Cardiac septum (tissue), 1 donor: ENCODE measurements at regions of chr1 and their contacts with region 1.

Region 1: DNA sequence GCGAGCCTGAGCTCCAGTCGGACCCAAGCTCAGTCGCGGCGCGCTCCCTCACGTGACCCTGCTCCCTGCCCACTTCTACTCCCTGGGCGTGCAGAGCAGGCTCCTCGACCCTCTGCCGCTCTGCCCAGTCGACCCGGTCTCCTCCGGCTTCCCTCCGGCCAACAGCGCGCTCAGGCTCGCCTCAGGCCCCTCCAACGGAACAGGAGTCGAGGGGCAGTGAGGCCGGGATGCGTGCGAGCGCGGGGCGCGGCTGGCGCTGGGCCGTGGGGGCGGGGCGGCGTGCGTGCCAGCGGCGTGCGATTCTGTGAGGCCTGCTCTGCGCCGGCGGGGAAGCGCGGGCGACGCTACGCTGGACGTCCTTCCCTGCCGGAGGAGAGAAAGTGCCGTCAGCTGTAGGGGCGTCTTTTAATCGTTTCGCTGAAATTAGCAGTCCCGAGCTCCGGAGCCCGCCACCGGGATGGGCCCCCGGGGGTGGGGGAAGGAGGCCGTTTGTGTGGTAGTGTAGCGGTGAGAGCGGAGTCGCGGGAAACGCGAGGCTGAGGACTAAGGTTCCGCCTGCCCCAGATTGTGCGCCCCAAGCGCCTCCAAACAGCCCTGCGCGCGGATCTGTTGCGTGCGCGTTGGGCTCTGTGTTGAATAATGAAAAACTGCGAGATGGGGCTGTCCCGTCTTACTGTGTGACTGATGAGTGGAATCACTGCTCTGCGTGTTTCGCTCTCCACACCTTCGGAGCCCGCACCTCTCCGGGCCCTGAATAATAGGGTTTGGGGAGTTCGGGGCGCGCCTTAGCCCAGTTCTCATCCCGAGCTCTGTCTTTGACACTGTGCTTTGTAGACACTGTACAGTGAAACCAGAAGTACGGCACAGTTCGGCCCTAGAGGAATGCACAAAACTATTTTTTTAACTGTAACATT is at the start of gene ACBD6:
- DNase-seq: peak; percentile 91
- total RNA-seq, gene ACBD6: 19.0 TPM

Region 2: DNA sequence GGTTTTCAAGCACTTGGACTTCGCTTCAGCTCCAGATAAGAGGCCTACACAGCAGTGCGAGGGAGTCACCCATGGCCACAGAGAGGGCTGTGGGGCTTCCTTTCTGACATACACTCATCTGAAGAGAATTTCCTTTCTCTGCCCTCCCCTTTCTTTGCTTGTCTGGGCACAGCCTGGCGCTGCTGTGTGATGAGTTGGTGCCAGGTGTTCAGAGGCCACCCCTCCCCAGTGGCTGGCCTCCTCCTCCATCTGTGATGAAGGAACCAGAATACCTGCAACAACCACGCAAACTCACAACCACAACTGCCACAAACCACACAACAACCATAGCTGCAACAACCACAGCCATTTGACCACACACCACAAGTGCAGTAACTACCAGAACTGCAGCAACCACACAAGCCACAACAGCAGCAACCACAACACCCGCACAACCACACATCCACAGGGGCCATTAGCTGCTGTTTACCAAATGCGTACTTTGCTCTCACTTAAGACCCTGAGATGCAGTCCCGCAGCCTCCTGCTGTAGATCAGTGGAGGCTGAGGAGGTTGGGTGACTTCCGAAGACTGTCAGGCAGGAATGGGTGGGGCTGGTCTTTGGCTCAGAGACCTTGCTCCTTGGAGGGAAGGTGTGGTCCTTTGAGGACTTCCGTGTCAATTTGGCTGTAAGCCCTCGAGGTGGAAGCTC is 657.0 kb after region 1 on chr1:
- intact Hi-C with region 1: loop called (anchors 5 kb)
- DNase-seq: no peak